ENCODE measurements at regions of chr17 and their contacts with region 1.

Region 1: GRCh38 chr17:30761058-30761457 is 63.4 kb downstream of the CRLF3 start:
- DNase-seq: no peak
- H3K4me3 ChIP-seq: no peak overlapping the region
- H3K4me3 Mint-ChIP-seq: no peak overlapping the region
- H3K27ac ChIP-seq: no peak overlapping the region
- H3K27ac Mint-ChIP-seq: peak overlapping the region in 3 of 8 donors; percentile 14 to 86 (median 64)
- H3K4me1 ChIP-seq: no peaks in the 10 kb centered on the region
- H3K4me1 Mint-ChIP-seq: peaks cover 0 to 11% (median 3%) of the 10 kb centered on the region in 3 donors
- H3K27me3 ChIP-seq: no peaks in the 10 kb centered on the region
- H3K27me3 Mint-ChIP-seq: no peaks in the 10 kb centered on the region

Region 2: GRCh38 chr17:30796016-30796415 is 35.0 kb after region 1 on chr17:
- CTCF ChIA-PET with region 1: no interaction called
- POLR2A ChIA-PET with region 1: interaction called, 10 read pairs
- DNase-seq: no peak
- H3K4me3 ChIP-seq: no peak overlapping the region
- H3K4me3 Mint-ChIP-seq: no peak overlapping the region
- H3K27ac ChIP-seq: no peak overlapping the region
- H3K27ac Mint-ChIP-seq: peak overlapping the region in 5 of 8 donors; percentile 9 to 70 (median 49)
- H3K4me1 ChIP-seq: no peaks in the 10 kb centered on the region
- H3K4me1 Mint-ChIP-seq: peaks cover 3 to 18% (median 10%) of the 10 kb centered on the region in 3 donors
- H3K27me3 ChIP-seq: no peaks in the 10 kb centered on the region
- H3K27me3 Mint-ChIP-seq: no peaks in the 10 kb centered on the region

Measured in CD8-positive, alpha-beta memory T cell (primary cell).